Natural killer cell (primary cell): ENCODE measurements at regions of chr2 and their contacts with region 1.

Region 1: DNA sequence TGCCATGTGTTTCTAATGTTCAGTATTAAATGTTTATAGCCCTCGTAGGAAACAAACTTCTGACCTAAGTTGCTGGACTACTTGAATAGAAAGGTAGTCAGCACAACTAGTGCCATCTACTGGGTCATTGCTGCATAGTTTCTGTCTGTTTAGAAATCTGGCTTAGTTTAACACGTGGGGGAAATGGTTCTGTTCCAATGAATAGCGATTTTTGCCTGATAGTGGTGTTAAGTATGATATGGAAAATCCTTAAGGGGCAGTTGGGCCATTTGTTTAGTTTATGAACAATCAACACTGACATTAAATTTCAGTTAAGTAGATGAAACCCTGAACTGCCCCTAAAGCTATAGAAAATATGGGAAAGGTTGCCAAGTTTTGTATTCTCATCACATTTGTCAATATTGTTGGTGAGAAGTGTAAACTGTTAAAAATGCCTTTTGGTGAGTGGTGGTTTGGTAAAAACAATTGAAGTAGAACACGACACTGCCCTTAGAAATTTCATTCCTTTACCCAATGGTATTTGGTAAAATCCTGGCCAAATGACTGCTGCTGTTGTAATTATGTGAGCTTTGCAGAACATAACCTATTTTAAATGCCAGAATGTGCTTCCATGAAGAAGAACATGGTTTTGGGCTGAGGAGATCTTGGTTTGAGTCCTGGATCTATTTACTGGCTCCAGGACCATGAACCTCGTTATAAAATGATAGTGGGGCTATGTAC is 13.2 kb downstream of the NABP1 start:
- DNase-seq: peak in 1 of 2 donors; percentile 85
- ATAC-seq: peak; percentile 87 to 97 (median 90)
- H3K4me3 ChIP-seq: no peak overlapping the region
- H3K4me3 Mint-ChIP-seq: no peak overlapping the region
- H3K27ac ChIP-seq: no peak overlapping the region
- H3K27ac Mint-ChIP-seq: peak overlapping the region; percentile 44 to 80
- H3K4me1 ChIP-seq: no peaks in the 10 kb centered on the region
- H3K4me1 Mint-ChIP-seq: peaks cover 7 to 17% of the 10 kb centered on the region in 2 donors
- H3K27me3 ChIP-seq: no peaks in the 10 kb centered on the region
- H3K27me3 Mint-ChIP-seq: peaks cover 0 to 3% of the 10 kb centered on the region in 2 donors
- CTCF ChIP-seq: peak; percentile 83

Region 2: DNA sequence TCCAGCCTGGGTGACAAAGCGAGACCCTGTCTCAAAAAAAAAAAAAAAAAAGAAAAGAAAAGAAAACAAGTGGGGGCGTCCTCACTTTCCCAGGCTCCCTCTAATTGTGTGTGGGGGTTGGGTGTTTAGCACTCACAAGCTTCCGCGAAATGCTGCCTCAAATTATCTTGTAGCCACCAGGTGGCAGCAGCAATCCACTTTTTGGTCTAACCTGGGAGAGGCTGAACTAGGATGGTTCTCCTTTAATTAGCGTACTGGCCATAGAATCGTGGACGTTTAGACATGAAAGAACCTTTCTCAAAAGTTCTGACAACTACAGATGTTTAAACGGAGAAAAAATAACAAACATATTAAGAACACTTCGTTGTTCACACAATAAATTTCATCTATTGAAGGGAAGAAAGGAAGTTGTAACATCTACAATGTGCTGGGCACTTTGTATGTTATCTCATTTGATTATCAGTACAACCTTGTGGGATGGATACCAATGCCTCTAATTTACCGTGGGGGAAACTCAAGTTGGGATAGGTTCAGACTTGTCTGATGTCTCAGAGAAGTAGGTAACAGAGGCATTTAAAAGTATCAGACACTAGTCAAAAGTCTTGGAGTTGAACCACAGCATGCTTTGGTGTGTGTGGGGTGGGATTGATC is 136.0 kb before region 1 on chr2:
- intact Hi-C with region 1: loop called (anchors 1 kb)
- DNase-seq: peak; percentile 72 to 88
- ATAC-seq: peak; percentile 87 to 99 (median 96)
- H3K4me3 ChIP-seq: no peak overlapping the region
- H3K4me3 Mint-ChIP-seq: no peak overlapping the region
- H3K27ac ChIP-seq: no peak overlapping the region
- H3K27ac Mint-ChIP-seq: no peak overlapping the region
- H3K4me1 ChIP-seq: no peaks in the 10 kb centered on the region
- H3K4me1 Mint-ChIP-seq: peaks cover 5% of the 10 kb centered on the region in 2 donors
- H3K27me3 ChIP-seq: no peaks in the 10 kb centered on the region
- H3K27me3 Mint-ChIP-seq: peaks cover 29 to 48% of the 10 kb centered on the region in 2 donors
- CTCF ChIP-seq: peak; percentile 77

Region 3: GRCh38 chr2:191566344-191566743 is 124.8 kb before region 1 on chr2:
- intact Hi-C with region 1: loop called (anchors 1 kb)
- DNase-seq: peak; percentile 47 to 84
- ATAC-seq: peak; percentile 68 to 79 (median 76)
- H3K4me3 ChIP-seq: no peak overlapping the region
- H3K4me3 Mint-ChIP-seq: no peak overlapping the region
- H3K27ac ChIP-seq: no peak overlapping the region
- H3K27ac Mint-ChIP-seq: no peak overlapping the region
- H3K4me1 ChIP-seq: peaks cover 20% of the 10 kb centered on the region
- H3K4me1 Mint-ChIP-seq: peaks cover 24 to 27% of the 10 kb centered on the region in 2 donors
- H3K27me3 ChIP-seq: peaks cover 18% of the 10 kb centered on the region
- H3K27me3 Mint-ChIP-seq: peaks cover 56 to 91% of the 10 kb centered on the region in 2 donors
- CTCF ChIP-seq: peak; percentile 70